Activated CD4-positive, alpha-beta T cell treated with anti-CD3 and anti-CD28 coated beads for 36 hours (primary cell): ENCODE measurements at regions of chr17 and their contacts with region 1.

Region 1: GRCh38 chr17:7931709-7932482 is at the starts of genes CNTROB and TRAPPC1:
- DNase-seq: peak; percentile 100
- ATAC-seq: peak; percentile 99
- H3K4me3 Mint-ChIP-seq: peak within 1 kb of the TSS; percentile 95
- H3K27ac Mint-ChIP-seq: peak within 1 kb of the TSS; percentile 96
- H3K4me1 Mint-ChIP-seq: peaks cover 44% of the 10 kb centered on the region
- H3K27me3 Mint-ChIP-seq: no peaks in the 10 kb centered on the region
- total RNA-seq, gene CNTROB: 53.0 to 80.5 TPM
- total RNA-seq, gene TRAPPC1: 166 to 169 TPM

Region 2: DNA sequence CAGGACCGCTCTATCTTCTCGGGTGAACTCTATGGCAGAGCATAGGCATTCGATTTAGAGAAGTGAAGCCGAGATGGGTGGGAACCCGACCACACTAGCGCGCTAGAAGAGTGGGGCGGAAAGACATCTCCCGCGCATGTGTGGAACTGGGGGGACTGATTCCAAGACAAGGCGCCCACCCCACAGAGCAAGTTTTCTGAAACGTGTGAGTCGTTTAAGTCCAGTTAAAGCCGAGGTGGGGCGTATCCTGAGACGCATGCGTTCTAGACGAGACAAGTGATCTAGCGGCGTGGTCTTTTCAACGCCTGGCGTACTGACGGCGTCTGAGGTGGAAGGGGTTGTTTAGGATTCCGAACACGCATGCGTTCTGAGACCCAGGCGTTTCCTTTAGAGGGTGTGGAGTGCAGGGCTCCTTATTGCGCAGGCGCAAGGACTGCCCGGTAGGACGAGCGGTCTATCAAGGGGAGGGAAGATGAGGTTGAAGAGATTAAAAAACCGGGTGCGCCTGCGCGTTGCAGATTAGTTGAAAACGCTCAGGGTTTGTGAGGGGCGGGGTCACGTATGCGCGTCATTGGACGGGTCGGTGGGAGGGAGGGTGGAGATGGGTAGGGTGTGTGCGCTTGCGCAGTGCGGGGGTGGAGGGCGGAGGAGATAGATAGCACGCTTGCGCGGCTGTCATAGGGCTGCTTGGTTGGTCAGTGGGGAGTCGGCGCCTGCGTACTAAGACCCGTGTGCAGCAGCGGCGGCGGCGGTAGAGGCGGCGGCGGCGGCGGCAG is 624.8 kb before region 1 on chr17 and contains the start of gene EIF5A:
- CTCF ChIA-PET with region 1: no interaction called
- POLR2A ChIA-PET with region 1: no interaction called
- intact Hi-C with region 1: loop called in 1 of 2 experiments (anchors 1 kb)
- DNase-seq: peak; percentile 100
- ATAC-seq: peak; percentile 86
- H3K4me3 Mint-ChIP-seq: peak within 1 kb of the TSS; percentile 96
- H3K27ac Mint-ChIP-seq: peak within 1 kb of the TSS; percentile 100
- H3K4me1 Mint-ChIP-seq: peaks cover 36% of the 10 kb centered on the region
- H3K27me3 Mint-ChIP-seq: no peaks in the 10 kb centered on the region
- total RNA-seq, gene EIF5A: 780 to 934 TPM

Region 3: GRCh38 chr17:7614422-7615264 is 317.3 kb before region 1 on chr17 and contains the start of gene FXR2:
- CTCF ChIA-PET with region 1: no interaction called
- POLR2A ChIA-PET with region 1: interaction called, 4 read pairs
- intact Hi-C with region 1: loop called in 1 of 2 experiments (anchors 1 kb)
- DNase-seq: peak; percentile 100
- ATAC-seq: peak; percentile 95
- H3K4me3 Mint-ChIP-seq: peak within 1 kb of the TSS; percentile 85
- H3K27ac Mint-ChIP-seq: peak within 1 kb of the TSS; percentile 93
- H3K4me1 Mint-ChIP-seq: peaks cover 32% of the 10 kb centered on the region
- H3K27me3 Mint-ChIP-seq: no peaks in the 10 kb centered on the region
- total RNA-seq, gene FXR2: 35.6 to 50.2 TPM

Region 4: DNA sequence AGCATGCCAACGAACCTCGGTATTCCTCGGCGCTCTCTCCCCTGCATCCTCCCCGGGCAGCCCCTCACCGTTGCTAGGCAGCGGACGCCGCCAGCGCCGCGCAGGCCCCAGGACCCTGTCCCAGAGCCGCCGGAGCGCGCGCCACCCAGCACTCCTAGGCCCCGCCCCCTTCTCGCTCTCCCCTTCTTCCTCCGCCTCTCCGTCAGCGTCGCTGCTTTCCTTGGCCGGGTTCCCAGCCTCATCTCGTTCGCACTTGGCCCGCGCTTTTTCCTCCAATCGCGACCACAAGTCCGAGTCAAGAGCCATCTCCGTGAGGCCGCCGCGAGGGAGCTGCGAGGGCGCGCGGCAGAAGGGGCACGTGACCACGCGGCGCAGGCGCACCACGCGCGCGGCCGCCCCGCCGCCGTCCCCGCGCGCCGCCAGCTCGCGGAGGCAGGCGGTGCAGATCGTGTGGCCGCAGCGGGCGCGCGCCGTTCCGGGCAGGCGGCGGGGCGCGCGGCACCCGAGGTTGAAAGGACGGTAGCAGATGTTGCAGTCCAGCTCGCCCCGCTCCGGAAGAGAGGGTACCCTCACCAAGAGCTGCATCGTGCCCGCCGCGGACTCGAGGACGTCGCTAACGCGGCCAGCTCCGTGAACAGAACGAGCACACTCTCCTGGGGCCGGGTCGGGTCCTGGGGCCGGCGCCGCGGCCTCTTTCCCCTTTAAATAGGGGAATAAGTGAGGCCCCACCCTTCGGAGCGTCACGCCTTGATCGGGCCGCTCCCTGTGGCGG is 16.1 kb before region 1 on chr17 and contains the start of gene RNF227:
- CTCF ChIA-PET with region 1: interaction called, 58 read pairs
- POLR2A ChIA-PET with region 1: interaction called, 25 read pairs
- intact Hi-C with region 1: loop called (anchors 1 kb)
- DNase-seq: peak; percentile 95
- ATAC-seq: peak; percentile 88
- H3K4me3 Mint-ChIP-seq: peak within 1 kb of the TSS; percentile 86
- H3K27ac Mint-ChIP-seq: peak within 1 kb of the TSS; percentile 82
- H3K4me1 Mint-ChIP-seq: peaks cover 27% of the 10 kb centered on the region
- H3K27me3 Mint-ChIP-seq: no peaks in the 10 kb centered on the region
- total RNA-seq, gene RNF227: 3.8 to 5.6 TPM

Region 5: GRCh38 chr17:7989781-7990655 is 58.1 kb after region 1 on chr17:
- CTCF ChIA-PET with region 1: interaction called, 49 read pairs
- POLR2A ChIA-PET with region 1: no interaction called
- intact Hi-C with region 1: loop called in 1 of 2 experiments (anchors 1 kb)
- DNase-seq: peak; percentile 96
- ATAC-seq: peak; percentile 93
- H3K4me3 Mint-ChIP-seq: peak overlapping the region; percentile 73
- H3K27ac Mint-ChIP-seq: peak overlapping the region; percentile 87
- H3K4me1 Mint-ChIP-seq: peaks cover 14% of the 10 kb centered on the region
- H3K27me3 Mint-ChIP-seq: peaks cover 5% of the 10 kb centered on the region

Region 6: DNA sequence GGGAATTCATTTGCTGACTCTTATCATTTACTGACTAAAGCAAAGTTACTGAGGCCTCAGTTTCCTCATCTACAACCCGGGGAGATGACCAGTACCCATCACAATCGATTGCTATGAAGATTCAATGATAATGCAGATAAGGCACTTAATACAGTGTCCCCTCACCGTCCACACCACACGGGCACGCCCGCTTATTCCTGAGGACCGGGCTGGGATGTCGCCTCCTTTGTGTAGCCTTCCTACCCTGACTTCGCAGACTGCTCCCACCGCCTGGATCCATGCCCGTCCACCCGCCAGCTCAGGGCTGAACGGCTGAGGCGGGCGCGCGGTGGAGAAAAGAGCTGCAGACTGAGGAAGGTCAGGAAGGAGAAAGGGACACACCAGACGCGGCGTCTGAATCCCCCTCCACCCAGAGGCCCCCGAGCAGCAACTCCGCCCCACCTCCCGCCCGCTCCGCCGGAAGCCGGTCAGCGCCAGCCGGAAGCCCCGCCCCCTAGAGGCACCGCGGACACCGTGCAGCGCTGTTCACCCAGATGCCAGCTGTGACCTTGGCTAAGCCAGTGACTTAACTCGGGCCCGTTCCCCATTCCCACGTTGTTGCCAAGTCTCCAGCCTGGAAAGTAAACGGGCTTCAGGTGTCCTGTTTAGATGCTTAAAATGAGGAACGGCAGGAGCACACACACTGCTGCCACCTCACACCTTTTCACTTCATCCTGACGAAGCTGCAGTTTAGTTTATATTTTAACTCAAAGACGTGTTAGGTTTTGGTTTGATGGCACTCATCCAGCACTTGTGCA is 444.6 kb after region 1 on chr17 and contains the start of gene KRABD2:
- CTCF ChIA-PET with region 1: no interaction called
- POLR2A ChIA-PET with region 1: no interaction called
- intact Hi-C with region 1: loop called in 1 of 2 experiments (anchors 5 kb)
- DNase-seq: peak; percentile 95
- ATAC-seq: peak; percentile 99
- H3K4me3 Mint-ChIP-seq: peak within 1 kb of the TSS; percentile 81
- H3K27ac Mint-ChIP-seq: peak within 1 kb of the TSS; percentile 87
- H3K4me1 Mint-ChIP-seq: peaks cover 55% of the 10 kb centered on the region
- H3K27me3 Mint-ChIP-seq: no peaks in the 10 kb centered on the region